ENCODE measurements at regions of chr10 and their contacts with region 1.

Region 1: DNA sequence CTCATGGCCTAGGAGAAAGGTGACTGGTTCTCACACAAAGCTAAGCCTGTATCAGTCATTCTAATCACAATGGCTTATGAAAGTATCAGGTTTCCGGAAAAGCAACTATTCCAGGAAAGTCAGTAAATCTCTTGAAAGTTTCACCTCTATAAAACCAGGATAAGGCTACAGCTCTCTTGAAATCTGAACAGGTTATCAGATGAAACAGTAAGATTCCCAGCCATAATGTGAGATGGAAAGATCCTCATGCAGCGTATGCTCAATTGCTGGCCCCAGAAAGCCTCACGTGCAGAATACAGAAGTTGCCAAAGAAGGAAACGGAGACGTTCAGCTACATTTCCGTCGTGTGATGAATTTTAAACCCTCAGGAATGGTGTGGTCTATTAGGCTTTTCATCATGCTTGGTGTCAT is 90.0 kb downstream of the PFKFB3 start:
- DNase-seq: no peak
- ATAC-seq: no peak
- H3K4me3 ChIP-seq: no peak overlapping the region
- H3K4me3 Mint-ChIP-seq: peak overlapping the region in 2 of 10 donors; percentile 6 to 26
- H3K27ac ChIP-seq: no peak overlapping the region
- H3K27ac Mint-ChIP-seq: peak overlapping the region in 7 of 9 donors; percentile 10 to 72 (median 34)
- H3K4me1 ChIP-seq: peaks cover 6 to 8% of the 10 kb centered on the region in 2 donors
- H3K4me1 Mint-ChIP-seq: peaks cover 4 to 55% (median 32%) of the 10 kb centered on the region in 7 donors
- H3K27me3 ChIP-seq: no peaks in the 10 kb centered on the region
- H3K27me3 Mint-ChIP-seq: no peaks in the 10 kb centered on the region

Region 2: GRCh38 chr10:6008497-6009142 is 284.1 kb before region 1 on chr10:
- CTCF ChIA-PET with region 1: no interaction called
- POLR2A ChIA-PET with region 1: no interaction called
- intact Hi-C with region 1: no loop called
- DNase-seq: no peak
- ATAC-seq: no peak
- H3K4me3 ChIP-seq: no peak overlapping the region
- H3K4me3 Mint-ChIP-seq: no peak overlapping the region
- H3K27ac ChIP-seq: no peak overlapping the region
- H3K27ac Mint-ChIP-seq: no peak overlapping the region
- H3K4me1 ChIP-seq: no peaks in the 10 kb centered on the region
- H3K4me1 Mint-ChIP-seq: peaks cover 0 to 27% (median 4%) of the 10 kb centered on the region in 7 donors
- H3K27me3 ChIP-seq: no peaks in the 10 kb centered on the region
- H3K27me3 Mint-ChIP-seq: peaks cover 0 to 16% (median 0%) of the 10 kb centered on the region in 5 donors

Region 3: GRCh38 chr10:6244510-6244909 is 48.2 kb before region 1 on chr10:
- CTCF ChIA-PET with region 1: no interaction called
- POLR2A ChIA-PET with region 1: no interaction called
- intact Hi-C with region 1: no loop called
- DNase-seq: no peak
- ATAC-seq: no peak
- H3K4me3 ChIP-seq: no peak overlapping the region
- H3K4me3 Mint-ChIP-seq: no peak overlapping the region
- H3K27ac ChIP-seq: no peak overlapping the region
- H3K27ac Mint-ChIP-seq: no peak overlapping the region
- H3K4me1 ChIP-seq: peaks cover 0 to under 1% of the 10 kb centered on the region in 2 donors
- H3K4me1 Mint-ChIP-seq: peaks cover 0 to 16% (median 0%) of the 10 kb centered on the region in 7 donors
- H3K27me3 ChIP-seq: no peaks in the 10 kb centered on the region
- H3K27me3 Mint-ChIP-seq: no peaks in the 10 kb centered on the region

Region 4: DNA sequence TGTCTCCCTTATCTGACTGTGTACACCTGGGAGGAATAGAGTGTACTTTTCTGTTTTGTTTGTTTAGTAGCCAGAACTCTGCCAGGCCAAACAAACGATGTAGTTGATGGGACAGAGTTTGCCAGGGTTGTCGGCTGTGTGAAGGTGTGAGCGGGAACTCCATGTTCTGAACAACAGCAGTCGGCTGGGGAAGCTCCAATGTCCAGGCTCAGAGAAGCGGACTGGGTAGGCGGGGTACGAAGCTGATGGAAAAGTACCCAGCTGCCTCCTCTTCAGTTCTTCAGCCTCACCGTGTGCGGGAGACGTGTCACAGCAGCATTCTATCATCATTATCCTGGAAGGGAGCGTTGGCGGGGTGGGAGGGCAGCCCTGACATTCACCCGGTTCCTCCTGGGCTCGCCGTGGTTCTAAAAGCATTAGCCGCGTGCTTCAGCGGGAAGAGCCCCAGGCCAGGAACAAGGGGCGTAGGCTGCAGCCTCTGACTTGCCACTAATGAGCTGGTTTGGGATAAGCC is 37.1 kb before region 1 on chr10:
- CTCF ChIA-PET with region 1: no interaction called
- POLR2A ChIA-PET with region 1: no interaction called
- intact Hi-C with region 1: loop called in 1 of 2 experiments (anchors 5 kb)
- DNase-seq: no peak
- ATAC-seq: no peak
- H3K4me3 ChIP-seq: no peak overlapping the region
- H3K4me3 Mint-ChIP-seq: no peak overlapping the region
- H3K27ac ChIP-seq: no peak overlapping the region
- H3K27ac Mint-ChIP-seq: no peak overlapping the region
- H3K4me1 ChIP-seq: no peaks in the 10 kb centered on the region
- H3K4me1 Mint-ChIP-seq: peaks cover 0 to 9% (median 0%) of the 10 kb centered on the region in 7 donors
- H3K27me3 ChIP-seq: no peaks in the 10 kb centered on the region
- H3K27me3 Mint-ChIP-seq: no peaks in the 10 kb centered on the region

Region 5: DNA sequence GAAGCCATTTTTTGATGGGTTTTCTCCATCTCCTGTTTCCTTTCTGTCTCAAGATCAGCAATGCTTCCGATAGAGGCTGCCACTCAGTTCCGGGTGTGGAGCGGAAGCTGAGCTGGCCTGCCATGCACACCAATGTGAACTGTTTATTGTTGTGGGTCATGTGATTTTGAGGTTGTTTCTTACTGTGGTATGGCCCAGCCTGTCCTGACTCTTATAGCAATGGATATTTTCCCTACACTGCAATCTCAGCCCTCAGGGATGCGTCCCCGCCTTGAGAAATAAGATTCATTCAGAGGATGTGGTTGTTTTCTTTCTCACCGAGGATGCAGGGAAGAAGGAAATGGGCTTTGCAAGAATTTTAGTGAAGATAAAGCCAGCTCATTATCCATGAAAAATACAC is 44.6 kb after region 1 on chr10:
- CTCF ChIA-PET with region 1: interaction called, 4 read pairs
- POLR2A ChIA-PET with region 1: interaction called, 3 read pairs
- intact Hi-C with region 1: loop called in 1 of 2 experiments (anchors 5 kb)
- DNase-seq: no peak
- ATAC-seq: no peak
- H3K4me3 ChIP-seq: no peak overlapping the region
- H3K4me3 Mint-ChIP-seq: no peak overlapping the region
- H3K27ac ChIP-seq: no peak overlapping the region
- H3K27ac Mint-ChIP-seq: no peak overlapping the region
- H3K4me1 ChIP-seq: no peaks in the 10 kb centered on the region
- H3K4me1 Mint-ChIP-seq: peaks cover 0 to 6% (median 0%) of the 10 kb centered on the region in 7 donors
- H3K27me3 ChIP-seq: no peaks in the 10 kb centered on the region
- H3K27me3 Mint-ChIP-seq: no peaks in the 10 kb centered on the region